HepG2 (cell line): ENCODE measurements at regions of chr2 and their contacts with region 1.

Region 1: DNA sequence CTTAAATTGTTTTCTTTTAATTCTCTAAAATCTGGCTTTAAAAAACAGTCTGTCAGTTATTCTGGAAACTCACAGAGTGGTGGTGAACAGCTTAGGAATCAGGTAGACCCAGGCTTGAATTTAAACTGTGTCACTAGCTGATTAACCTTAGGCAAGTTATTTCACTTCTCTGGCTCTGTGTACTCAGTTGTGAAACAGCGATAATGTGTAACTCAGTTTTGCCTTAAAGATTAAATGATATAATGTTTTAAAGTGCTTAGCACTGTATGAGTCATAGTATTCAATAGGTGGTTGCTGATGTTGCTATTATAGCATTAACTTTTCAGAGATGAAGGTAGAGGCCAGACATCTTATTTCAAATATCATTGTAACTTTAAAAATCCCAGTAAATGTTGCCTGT is 40.7 kb downstream of the PKP4 start:
- DNase-seq: peak; percentile 55
- ATAC-seq: peak; percentile 74
- H3K4me3 ChIP-seq: no peak overlapping the region
- H3K27ac ChIP-seq: peak overlapping the region; percentile 1
- H3K4me1 ChIP-seq: peaks cover 51% of the 10 kb centered on the region
- H3K27me3 ChIP-seq: no peaks in the 10 kb centered on the region
- CTCF ChIP-seq: no peak
- EP300 ChIP-seq: 0 out of 4 replicates have a peak, but pooled peaks of 1 of the 2 experiments have one; percentile 20
- POLR2A ChIP-seq: no peak
- RAD21 ChIP-seq: no peak

Region 2: GRCh38 chr2:158464426-158465281 is 32.8 kb before region 1 on chr2:
- CTCF ChIA-PET with region 1: no interaction called
- POLR2A ChIA-PET with region 1: no interaction called
- in situ Hi-C with region 1: no loop called
- intact Hi-C with region 1: loop called (anchors 5 kb)
- DNase-seq: peak; percentile 40
- ATAC-seq: peak; percentile 88
- H3K4me3 ChIP-seq: no peak overlapping the region
- H3K27ac ChIP-seq: no peak overlapping the region
- H3K4me1 ChIP-seq: peaks cover 44% of the 10 kb centered on the region
- H3K27me3 ChIP-seq: no peaks in the 10 kb centered on the region
- CTCF ChIP-seq: peak; percentile 55
- EP300 ChIP-seq: no peak
- POLR2A ChIP-seq: no peak
- RAD21 ChIP-seq: no peak